ENCODE measurements at regions of chr5 and their contacts with region 1.

Region 1: DNA sequence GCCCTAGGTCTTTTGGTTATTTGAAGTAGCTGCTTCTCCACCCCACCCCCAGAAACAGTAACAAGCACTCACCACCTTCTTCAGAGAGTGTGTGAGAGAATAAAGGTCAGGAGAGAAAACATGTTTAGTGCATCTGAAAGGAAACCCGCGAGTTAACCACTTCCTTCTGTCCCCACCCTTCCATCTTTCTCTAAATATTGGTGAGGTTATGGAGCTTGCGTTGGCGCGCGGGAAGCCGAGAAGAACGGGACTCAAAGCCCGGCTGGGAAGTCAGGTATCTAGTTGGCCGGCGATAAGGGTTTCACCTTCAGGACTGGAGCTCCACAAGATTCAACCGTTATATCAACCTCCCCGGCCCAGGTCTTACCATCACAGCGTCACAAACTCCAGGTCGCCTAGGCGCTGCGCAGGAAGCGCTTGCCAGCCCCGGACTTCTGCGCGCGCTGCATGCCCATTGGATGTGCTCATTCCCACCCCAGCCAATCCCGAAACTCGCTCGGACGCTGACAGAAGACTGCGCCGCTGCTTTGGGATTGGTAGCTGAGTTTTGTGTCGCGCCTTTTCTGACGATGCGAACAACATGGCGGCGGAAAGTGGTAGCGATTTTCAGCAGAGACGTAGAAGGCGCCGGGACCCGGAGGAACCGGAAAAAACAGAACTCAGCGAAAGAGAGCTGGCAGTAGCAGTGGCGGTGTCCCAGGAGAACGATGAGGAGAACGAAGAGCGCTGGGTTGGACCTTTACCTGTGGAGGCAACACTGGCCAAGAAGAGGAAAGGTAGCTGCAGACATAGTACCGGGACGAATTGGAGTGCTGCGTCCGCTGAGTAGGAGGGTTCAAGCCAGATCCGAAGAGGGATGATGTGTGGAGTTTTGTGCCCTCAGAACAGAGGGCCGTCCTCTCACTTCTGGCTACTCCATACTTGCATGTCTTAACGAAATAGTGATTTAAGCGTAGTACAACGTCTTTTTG is at the starts of genes CENPK and PPWD1:
- DNase-seq: peak; percentile 89 to 97 (median 93)
- ATAC-seq: peak; percentile 96
- H3K4me3 ChIP-seq: peak within 1 kb of the TSS; percentile 75
- H3K4me3 Mint-ChIP-seq: peak within 1 kb of the TSS; percentile 95
- H3K27ac ChIP-seq: peak within 1 kb of the TSS; percentile 93 to 94
- H3K27ac Mint-ChIP-seq: peak within 1 kb of the TSS; percentile 94
- H3K4me1 ChIP-seq: peaks cover 15% of the 10 kb centered on the region
- H3K4me1 Mint-ChIP-seq: peaks cover 64% of the 10 kb centered on the region
- H3K27me3 ChIP-seq: no peaks in the 10 kb centered on the region
- H3K27me3 Mint-ChIP-seq: no peaks in the 10 kb centered on the region
- CTCF ChIP-seq: no peak
- total RNA-seq, gene CENPK: 14.4 to 16.8 TPM
- total RNA-seq, gene PPWD1: 88.0 to 89.2 TPM

Region 2: DNA sequence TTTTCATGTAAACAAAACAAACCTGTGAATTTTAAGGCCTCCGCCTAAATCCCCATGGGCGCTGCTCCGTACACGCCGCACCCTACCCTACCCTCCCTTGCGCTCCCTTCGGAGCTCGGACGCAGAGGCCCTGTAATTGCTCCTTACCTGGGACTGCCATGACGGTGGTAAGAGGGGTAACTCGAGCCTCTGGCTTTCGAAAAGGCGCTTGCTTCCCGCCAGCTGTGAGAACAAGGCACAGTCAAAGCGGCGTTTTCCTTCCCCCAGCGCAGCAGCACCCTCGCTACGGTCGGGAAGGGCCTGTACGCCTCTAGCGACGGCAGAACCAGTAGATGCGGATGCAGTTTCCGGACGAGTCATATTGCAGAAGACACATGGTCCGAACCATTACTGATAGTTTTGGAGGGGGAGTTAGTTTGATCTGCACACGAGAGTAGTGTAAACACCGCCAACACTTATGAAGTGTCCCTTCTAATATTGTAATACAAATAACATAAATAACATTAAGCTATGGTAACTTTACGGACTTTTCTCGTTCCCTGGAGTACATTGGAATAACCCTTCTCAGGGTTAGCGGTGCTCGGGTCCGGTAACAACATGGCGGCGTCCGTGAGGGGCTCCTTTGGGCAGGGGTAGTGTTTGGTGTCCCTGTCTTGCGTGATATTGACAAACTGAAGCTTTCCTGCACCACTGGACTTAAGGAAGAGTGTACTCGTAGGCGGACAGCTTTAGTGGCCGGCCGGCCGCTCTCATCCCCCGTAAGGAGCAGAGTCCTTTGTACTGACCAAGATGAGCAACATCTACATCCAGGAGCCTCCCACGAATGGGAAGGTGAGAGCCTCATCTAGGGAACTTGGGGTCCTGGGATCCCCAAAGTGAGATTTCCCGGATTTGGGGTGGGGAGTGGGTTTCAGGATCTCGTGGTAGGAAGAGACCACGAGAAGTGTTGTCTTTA is 794.4 kb before region 1 on chr5 and contains the starts of genes CWC27 and SREK1IP1:
- CTCF ChIA-PET with region 1: interaction called, 4 read pairs
- POLR2A ChIA-PET with region 1: interaction called, 29 read pairs
- intact Hi-C with region 1: loop called in 1 of 2 experiments (anchors 2 kb)
- DNase-seq: peak; percentile 63 to 92 (median 74)
- ATAC-seq: peak; percentile 94
- H3K4me3 ChIP-seq: peak within 1 kb of the TSS; percentile 72
- H3K4me3 Mint-ChIP-seq: peak within 1 kb of the TSS; percentile 96
- H3K27ac ChIP-seq: peak within 1 kb of the TSS; percentile 63 to 67
- H3K27ac Mint-ChIP-seq: peak within 1 kb of the TSS; percentile 89
- H3K4me1 ChIP-seq: peaks cover 27% of the 10 kb centered on the region
- H3K4me1 Mint-ChIP-seq: peaks cover 82% of the 10 kb centered on the region
- H3K27me3 ChIP-seq: no peaks in the 10 kb centered on the region
- H3K27me3 Mint-ChIP-seq: no peaks in the 10 kb centered on the region
- CTCF ChIP-seq: no peak
- total RNA-seq, gene CWC27: 14.2 to 14.5 TPM
- total RNA-seq, gene SREK1IP1: 18.4 to 21.4 TPM

Region 3: GRCh38 chr5:65481635-65482295 is 81.3 kb before region 1 on chr5 and contains the start of gene ADAMTS6:
- CTCF ChIA-PET with region 1: no interaction called
- POLR2A ChIA-PET with region 1: interaction called, 39 read pairs
- intact Hi-C with region 1: loop called (anchors 5 kb)
- DNase-seq: peak; percentile 46 to 88 (median 72)
- ATAC-seq: peak; percentile 87
- H3K4me3 ChIP-seq: peak within 1 kb of the TSS; percentile 78
- H3K4me3 Mint-ChIP-seq: peak within 1 kb of the TSS; percentile 94
- H3K27ac ChIP-seq: peak within 1 kb of the TSS in 1 of 2 donors; percentile 57
- H3K27ac Mint-ChIP-seq: peak within 1 kb of the TSS; percentile 80
- H3K4me1 ChIP-seq: peaks cover 8% of the 10 kb centered on the region
- H3K4me1 Mint-ChIP-seq: peaks cover 14% of the 10 kb centered on the region
- H3K27me3 ChIP-seq: peaks cover 3 to 7% of the 10 kb centered on the region in 2 experiments
- H3K27me3 Mint-ChIP-seq: no peaks in the 10 kb centered on the region
- CTCF ChIP-seq: no peak
- total RNA-seq, gene ADAMTS6: 2.0 to 2.6 TPM

Region 4: GRCh38 chr5:65548281-65548680 is 14.7 kb before region 1 on chr5:
- CTCF ChIA-PET with region 1: no interaction called
- POLR2A ChIA-PET with region 1: interaction called, 25 read pairs
- intact Hi-C with region 1: no loop called
- DNase-seq: no peak
- ATAC-seq: no peak
- H3K4me3 ChIP-seq: no peak overlapping the region
- H3K4me3 Mint-ChIP-seq: no peak overlapping the region
- H3K27ac ChIP-seq: no peak overlapping the region
- H3K27ac Mint-ChIP-seq: no peak overlapping the region
- H3K4me1 ChIP-seq: no peaks in the 10 kb centered on the region
- H3K4me1 Mint-ChIP-seq: no peaks in the 10 kb centered on the region
- H3K27me3 ChIP-seq: no peaks in the 10 kb centered on the region
- H3K27me3 Mint-ChIP-seq: no peaks in the 10 kb centered on the region
- CTCF ChIP-seq: no peak

Region 5: GRCh38 chr5:65588694-65589093 is 25.7 kb after region 1 on chr5:
- CTCF ChIA-PET with region 1: interaction called, 4 read pairs
- POLR2A ChIA-PET with region 1: interaction called, 14 read pairs
- intact Hi-C with region 1: no loop called
- DNase-seq: no peak
- ATAC-seq: no peak
- H3K4me3 ChIP-seq: no peak overlapping the region
- H3K4me3 Mint-ChIP-seq: no peak overlapping the region
- H3K27ac ChIP-seq: no peak overlapping the region
- H3K27ac Mint-ChIP-seq: no peak overlapping the region
- H3K4me1 ChIP-seq: no peaks in the 10 kb centered on the region
- H3K4me1 Mint-ChIP-seq: no peaks in the 10 kb centered on the region
- H3K27me3 ChIP-seq: no peaks in the 10 kb centered on the region
- H3K27me3 Mint-ChIP-seq: no peaks in the 10 kb centered on the region
- CTCF ChIP-seq: no peak

Region 6: GRCh38 chr5:65721720-65722574 is 158.9 kb after region 1 on chr5 and contains the starts of genes NLN and SGTB:
- CTCF ChIA-PET with region 1: no interaction called
- POLR2A ChIA-PET with region 1: interaction called, 50 read pairs
- intact Hi-C with region 1: no loop called
- DNase-seq: peak; percentile 70 to 92 (median 82)
- ATAC-seq: peak; percentile 86
- H3K4me3 ChIP-seq: peak within 1 kb of the TSS; percentile 88
- H3K4me3 Mint-ChIP-seq: peak within 1 kb of the TSS; percentile 95
- H3K27ac ChIP-seq: peak within 1 kb of the TSS; percentile 83 to 97
- H3K27ac Mint-ChIP-seq: peak within 1 kb of the TSS; percentile 86
- H3K4me1 ChIP-seq: peaks cover 32% of the 10 kb centered on the region
- H3K4me1 Mint-ChIP-seq: peaks cover 26% of the 10 kb centered on the region
- H3K27me3 ChIP-seq: no peaks in the 10 kb centered on the region
- H3K27me3 Mint-ChIP-seq: no peaks in the 10 kb centered on the region
- CTCF ChIP-seq: no peak
- total RNA-seq, gene NLN: 1.4 to 2.5 TPM
- total RNA-seq, gene SGTB: 84.2 to 93.7 TPM